AG04449 (cell line): ENCODE measurements at regions of chr17 and their contacts with region 1.

Region 1: GRCh38 chr17:33012522-33013033 is 20.9 kb downstream of the SPACA3 start:
- DNase-seq: peak; percentile 90
- H3K4me3 ChIP-seq: no peak overlapping the region
- CTCF ChIP-seq: no peak

Region 2: GRCh38 chr17:32997753-32998632 is 14.6 kb before region 1 on chr17:
- CTCF ChIA-PET with region 1: interaction called, 27 read pairs
- POLR2A ChIA-PET with region 1: no interaction called
- DNase-seq: no peak
- H3K4me3 ChIP-seq: peak overlapping the region; percentile 37
- CTCF ChIP-seq: peak; percentile 90

Region 3: GRCh38 chr17:33086041-33086440 is 73.5 kb after region 1 on chr17:
- CTCF ChIA-PET with region 1: no interaction called
- POLR2A ChIA-PET with region 1: no interaction called
- DNase-seq: no peak
- H3K4me3 ChIP-seq: no peak overlapping the region
- CTCF ChIP-seq: no peak